ENCODE measurements at regions of chr6 and their contacts with region 1.

Region 1: GRCh38 chr6:26401987-26402658 is at the start of gene BTN3A1:
- DNase-seq: peak; percentile 67 to 88
- ATAC-seq: peak; percentile 85 to 88 (median 87)
- H3K4me3 ChIP-seq: peak within 1 kb of the TSS; percentile 96
- H3K4me3 Mint-ChIP-seq: peak within 1 kb of the TSS; percentile 95
- H3K27ac ChIP-seq: peak within 1 kb of the TSS; percentile 99
- H3K27ac Mint-ChIP-seq: peak within 1 kb of the TSS; percentile 96 to 99
- H3K4me1 ChIP-seq: peaks cover 43% of the 10 kb centered on the region
- H3K4me1 Mint-ChIP-seq: peaks cover 62 to 65% of the 10 kb centered on the region in 2 donors
- H3K27me3 ChIP-seq: no peaks in the 10 kb centered on the region
- H3K27me3 Mint-ChIP-seq: no peaks in the 10 kb centered on the region
- CTCF ChIP-seq: no peak
- total RNA-seq, gene BTN3A1: 285 to 373 (median 348) TPM

Region 2: DNA sequence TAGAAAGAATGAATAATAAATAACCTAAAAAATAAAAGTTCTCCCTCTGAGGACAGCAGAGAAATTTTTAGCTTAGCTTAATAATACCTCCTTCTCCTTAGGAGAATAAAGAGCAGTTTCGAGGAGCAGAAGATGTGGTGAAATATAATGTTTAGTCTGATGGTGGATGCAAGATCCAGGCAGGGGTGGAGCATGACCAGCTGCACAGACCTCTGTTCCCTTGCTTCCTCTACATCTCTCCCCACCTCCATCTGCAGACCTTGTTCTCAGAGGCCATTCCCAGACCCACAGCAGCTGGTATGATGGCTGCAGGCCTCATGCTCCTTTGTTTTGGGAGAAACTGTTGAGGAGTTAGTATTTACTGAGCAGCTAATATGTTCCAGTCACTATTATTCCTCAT is 35.6 kb before region 1 on chr6:
- intact Hi-C with region 1: loop called (anchors 1 kb)
- DNase-seq: peak in 1 of 2 donors; percentile 37
- ATAC-seq: no peak
- H3K4me3 ChIP-seq: peak overlapping the region; percentile 74
- H3K4me3 Mint-ChIP-seq: no peak overlapping the region
- H3K27ac ChIP-seq: no peak overlapping the region
- H3K27ac Mint-ChIP-seq: no peak overlapping the region
- H3K4me1 ChIP-seq: peaks cover 41% of the 10 kb centered on the region
- H3K4me1 Mint-ChIP-seq: peaks cover 52 to 56% of the 10 kb centered on the region in 2 donors
- H3K27me3 ChIP-seq: no peaks in the 10 kb centered on the region
- H3K27me3 Mint-ChIP-seq: no peaks in the 10 kb centered on the region
- CTCF ChIP-seq: no peak

Region 3: DNA sequence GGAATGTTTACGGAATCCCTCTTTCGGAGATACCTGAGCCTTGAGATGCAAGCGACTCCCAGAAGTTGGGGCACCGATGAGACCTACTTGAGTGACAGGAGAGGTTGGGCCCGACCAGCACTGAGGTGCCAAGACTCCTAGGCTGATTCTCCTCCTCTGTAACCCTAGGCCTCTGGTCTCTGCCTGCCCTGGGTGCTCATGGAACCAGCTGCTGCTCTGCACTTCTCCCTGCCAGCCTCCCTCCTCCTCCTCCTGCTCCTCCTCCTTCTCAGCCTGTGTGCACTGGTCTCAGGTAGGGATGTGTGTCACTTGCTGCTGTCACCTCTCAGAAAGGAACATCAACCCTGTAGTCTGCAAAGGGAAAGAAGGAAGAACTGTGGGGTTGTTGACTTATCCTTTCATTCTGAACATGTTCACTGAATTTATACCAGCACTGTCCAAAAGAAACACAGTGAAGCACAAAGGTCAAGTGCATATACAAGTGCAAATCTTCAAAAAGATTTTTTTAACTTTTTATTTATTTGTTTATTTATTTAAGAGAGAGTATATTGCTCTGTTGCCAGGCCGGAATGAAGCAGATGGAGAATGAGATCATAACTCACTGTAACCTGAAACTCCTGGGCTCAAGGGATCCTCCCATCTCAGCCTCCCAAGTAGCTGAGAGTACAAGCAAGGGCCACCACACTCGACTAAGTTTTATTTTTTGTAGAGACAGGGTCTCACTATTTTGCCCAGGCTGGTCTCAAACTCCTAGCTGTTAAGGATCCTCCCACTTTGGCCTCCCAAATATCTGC is 18.3 kb before region 1 on chr6:
- intact Hi-C with region 1: loop called (anchors 2 kb)
- DNase-seq: peak; percentile 26 to 51
- ATAC-seq: peak in 1 of 3 donors; percentile 21
- H3K4me3 ChIP-seq: peak overlapping the region; percentile 77
- H3K4me3 Mint-ChIP-seq: peak overlapping the region; percentile 100
- H3K27ac ChIP-seq: peak overlapping the region; percentile 86
- H3K27ac Mint-ChIP-seq: peak overlapping the region; percentile 98 to 100
- H3K4me1 ChIP-seq: peaks cover 16% of the 10 kb centered on the region
- H3K4me1 Mint-ChIP-seq: peaks cover 32 to 58% of the 10 kb centered on the region in 2 donors
- H3K27me3 ChIP-seq: no peaks in the 10 kb centered on the region
- H3K27me3 Mint-ChIP-seq: no peaks in the 10 kb centered on the region
- CTCF ChIP-seq: no peak

Region 4: GRCh38 chr6:26421259-26422144 is 19.4 kb after region 1 on chr6:
- intact Hi-C with region 1: loop called (anchors 2 kb)
- DNase-seq: peak; percentile 33 to 84
- ATAC-seq: peak; percentile 93 to 97 (median 95)
- H3K4me3 ChIP-seq: peak overlapping the region; percentile 83
- H3K4me3 Mint-ChIP-seq: no peak overlapping the region
- H3K27ac ChIP-seq: peak overlapping the region; percentile 64
- H3K27ac Mint-ChIP-seq: no peak overlapping the region
- H3K4me1 ChIP-seq: peaks cover 12% of the 10 kb centered on the region
- H3K4me1 Mint-ChIP-seq: peaks cover 0 to 7% of the 10 kb centered on the region in 2 donors
- H3K27me3 ChIP-seq: no peaks in the 10 kb centered on the region
- H3K27me3 Mint-ChIP-seq: no peaks in the 10 kb centered on the region
- CTCF ChIP-seq: no peak

Region 5: DNA sequence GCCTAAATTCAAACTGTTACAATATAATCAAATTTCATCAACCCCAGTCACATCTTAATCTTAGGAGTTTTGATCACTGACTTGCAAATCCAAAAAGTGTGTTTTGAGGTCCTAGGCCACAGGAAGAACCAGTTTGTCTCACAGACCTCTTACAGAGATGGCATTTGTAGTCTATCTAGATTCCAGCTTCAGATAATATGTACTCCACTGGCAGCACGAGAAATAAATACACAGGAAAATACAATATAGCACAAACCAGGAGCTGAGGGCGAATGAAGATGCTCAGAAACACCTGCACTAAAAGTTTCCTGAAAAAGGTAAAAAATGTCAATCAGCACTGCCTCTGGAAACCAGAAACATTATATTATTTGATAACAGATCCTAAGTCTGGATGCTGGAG is 37.5 kb after region 1 on chr6:
- intact Hi-C with region 1: loop called (anchors 5 kb)
- DNase-seq: peak in 1 of 2 donors; percentile 55
- ATAC-seq: no peak
- H3K4me3 ChIP-seq: peak overlapping the region; percentile 90
- H3K4me3 Mint-ChIP-seq: peak overlapping the region; percentile 97
- H3K27ac ChIP-seq: peak overlapping the region; percentile 97
- H3K27ac Mint-ChIP-seq: peak overlapping the region; percentile 99 to 100
- H3K4me1 ChIP-seq: peaks cover 15% of the 10 kb centered on the region
- H3K4me1 Mint-ChIP-seq: peaks cover 42 to 45% of the 10 kb centered on the region in 2 donors
- H3K27me3 ChIP-seq: no peaks in the 10 kb centered on the region
- H3K27me3 Mint-ChIP-seq: no peaks in the 10 kb centered on the region
- CTCF ChIP-seq: no peak

Region 6: GRCh38 chr6:26473758-26474438 is 71.8 kb after region 1 on chr6:
- intact Hi-C with region 1: loop called (anchors 1 kb)
- DNase-seq: peak; percentile 79 to 95
- ATAC-seq: peak; percentile 91 to 97 (median 95)
- H3K4me3 ChIP-seq: peak overlapping the region; percentile 67
- H3K4me3 Mint-ChIP-seq: peak overlapping the region; percentile 99
- H3K27ac ChIP-seq: peak overlapping the region; percentile 99
- H3K27ac Mint-ChIP-seq: peak overlapping the region; percentile 94 to 99
- H3K4me1 ChIP-seq: peaks cover 40% of the 10 kb centered on the region
- H3K4me1 Mint-ChIP-seq: peaks cover 39% of the 10 kb centered on the region in 2 donors
- H3K27me3 ChIP-seq: no peaks in the 10 kb centered on the region
- H3K27me3 Mint-ChIP-seq: no peaks in the 10 kb centered on the region
- CTCF ChIP-seq: no peak